Dorsolateral prefrontal cortex (tissue), 120 donors: ENCODE measurements at regions of chr3 and their contacts with region 1.

Region 1: GRCh38 chr3:71466483-71466882 is 117.0 kb downstream of the FOXP1 start:
- DNase-seq: peak in 2 of 10 donors; percentile 47 to 50
- H3K4me3 ChIP-seq: peak overlapping the region in 28 of 59 donors; percentile 1 to 48 (median 22)
- H3K27ac ChIP-seq: peak overlapping the region in 4 of 59 donors; percentile 6 to 55 (median 23)
- H3K27me3 ChIP-seq: no peaks in the 10 kb centered on the region
- CTCF ChIP-seq: no peak

Region 2: GRCh38 chr3:71317749-71318457 is 148.6 kb before region 1 on chr3:
- intact Hi-C with region 1: no loop called
- DNase-seq: no peak
- H3K4me3 ChIP-seq: no peak overlapping the region
- H3K27ac ChIP-seq: no peak overlapping the region
- H3K27me3 ChIP-seq: no peaks in the 10 kb centered on the region
- CTCF ChIP-seq: no peak

Region 3: GRCh38 chr3:71400986-71401451 is 65.5 kb before region 1 on chr3:
- intact Hi-C with region 1: loop called in 1 of 2 experiments (anchors 2 kb)
- DNase-seq: no peak
- H3K4me3 ChIP-seq: no peak overlapping the region
- H3K27ac ChIP-seq: no peak overlapping the region
- H3K27me3 ChIP-seq: no peaks in the 10 kb centered on the region
- CTCF ChIP-seq: no peak